ENCODE measurements at regions of chr11 and their contacts with region 1.

Region 1: DNA sequence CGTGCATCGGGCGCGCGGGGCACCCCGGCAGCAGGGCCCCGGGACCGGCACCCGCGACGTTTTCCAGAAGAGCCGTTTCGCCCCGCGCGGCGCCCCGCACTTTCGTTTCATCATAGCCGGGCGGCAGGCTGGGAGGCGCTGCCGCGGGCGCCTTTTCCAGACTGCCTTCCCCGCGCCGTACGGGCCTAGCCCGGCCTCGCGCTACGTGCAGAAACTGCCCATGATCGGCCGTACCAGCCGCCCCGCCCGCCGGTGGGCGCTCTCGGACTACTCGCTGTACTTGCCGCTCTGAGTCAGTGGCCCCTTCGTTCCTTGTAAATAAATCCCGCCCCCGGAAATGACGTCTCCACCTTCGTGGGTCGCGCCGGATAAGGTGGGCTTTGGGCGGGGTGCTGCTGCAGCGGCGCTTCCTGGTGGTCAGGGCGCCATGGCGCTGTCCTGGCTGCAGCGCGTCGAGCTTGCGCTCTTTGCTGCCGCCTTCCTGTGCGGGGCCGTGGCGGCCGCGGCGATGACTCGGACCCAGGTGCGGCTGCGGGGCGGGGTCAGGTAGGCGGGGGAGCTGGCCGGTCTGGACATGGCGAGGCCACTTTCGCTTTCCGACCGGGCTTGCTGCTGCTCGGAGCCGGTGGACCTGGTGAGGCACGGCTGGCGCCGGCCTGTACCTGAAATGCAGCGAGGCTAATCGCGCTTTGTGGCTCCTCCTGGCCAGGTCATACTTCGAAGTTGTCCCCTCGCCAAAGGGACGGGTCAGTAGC is at the start of gene TMEM179B:
- DNase-seq: peak; percentile 96 to 100 (median 99)

Region 2: GRCh38 chr11:62689421-62690183 is 97.6 kb before region 1 on chr11 and contains the start of gene LRRN4CL:
- intact Hi-C with region 1: no loop called
- DNase-seq: peak; percentile 29 to 91 (median 69)

Region 3: DNA sequence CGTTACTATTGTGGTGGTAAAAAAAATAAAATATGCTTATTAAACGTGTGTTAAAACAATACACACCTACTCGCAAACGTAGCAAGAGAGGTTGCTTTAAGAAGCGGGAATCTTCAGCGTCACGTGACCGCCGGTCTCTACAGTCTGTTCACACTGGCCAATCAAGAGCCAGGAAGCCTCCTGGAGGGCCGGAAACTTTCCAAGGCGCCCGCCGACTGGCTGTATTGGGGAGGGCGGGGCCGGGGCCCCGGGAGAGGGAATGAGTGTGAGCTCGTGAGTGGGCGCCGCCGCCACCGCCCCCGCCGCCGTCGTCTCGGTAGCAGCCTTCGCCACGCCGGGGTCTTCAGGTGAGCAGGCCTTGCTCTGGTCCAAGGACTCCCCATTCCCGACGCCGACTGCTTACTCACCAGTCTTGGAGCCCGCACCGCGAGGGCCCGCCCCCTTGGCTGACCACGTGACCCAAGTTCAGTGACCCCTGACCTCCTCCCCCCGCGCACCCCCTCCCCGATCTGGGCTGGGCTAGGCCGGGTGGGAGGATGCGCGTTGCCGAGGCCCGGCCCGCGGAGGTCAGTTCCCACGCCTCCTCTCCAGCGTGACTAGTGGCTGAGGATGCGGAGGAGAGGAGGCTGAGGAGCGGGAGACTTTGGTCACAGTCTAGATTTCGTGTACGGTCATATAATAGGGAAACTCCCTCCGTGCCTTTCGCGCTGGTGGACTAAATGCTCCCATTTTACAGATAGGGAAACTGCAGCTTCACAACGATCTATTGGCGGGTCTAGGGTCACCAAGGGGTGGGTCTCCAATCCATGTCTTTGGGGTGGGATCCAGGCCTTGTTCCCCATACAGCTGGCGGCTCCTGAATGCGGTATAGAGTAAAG is 15.8 kb before region 1 on chr11 and contains the start of gene TAF6L:
- intact Hi-C with region 1: loop called (anchors 2 kb)
- DNase-seq: peak; percentile 96 to 100 (median 98)

Region 4: DNA sequence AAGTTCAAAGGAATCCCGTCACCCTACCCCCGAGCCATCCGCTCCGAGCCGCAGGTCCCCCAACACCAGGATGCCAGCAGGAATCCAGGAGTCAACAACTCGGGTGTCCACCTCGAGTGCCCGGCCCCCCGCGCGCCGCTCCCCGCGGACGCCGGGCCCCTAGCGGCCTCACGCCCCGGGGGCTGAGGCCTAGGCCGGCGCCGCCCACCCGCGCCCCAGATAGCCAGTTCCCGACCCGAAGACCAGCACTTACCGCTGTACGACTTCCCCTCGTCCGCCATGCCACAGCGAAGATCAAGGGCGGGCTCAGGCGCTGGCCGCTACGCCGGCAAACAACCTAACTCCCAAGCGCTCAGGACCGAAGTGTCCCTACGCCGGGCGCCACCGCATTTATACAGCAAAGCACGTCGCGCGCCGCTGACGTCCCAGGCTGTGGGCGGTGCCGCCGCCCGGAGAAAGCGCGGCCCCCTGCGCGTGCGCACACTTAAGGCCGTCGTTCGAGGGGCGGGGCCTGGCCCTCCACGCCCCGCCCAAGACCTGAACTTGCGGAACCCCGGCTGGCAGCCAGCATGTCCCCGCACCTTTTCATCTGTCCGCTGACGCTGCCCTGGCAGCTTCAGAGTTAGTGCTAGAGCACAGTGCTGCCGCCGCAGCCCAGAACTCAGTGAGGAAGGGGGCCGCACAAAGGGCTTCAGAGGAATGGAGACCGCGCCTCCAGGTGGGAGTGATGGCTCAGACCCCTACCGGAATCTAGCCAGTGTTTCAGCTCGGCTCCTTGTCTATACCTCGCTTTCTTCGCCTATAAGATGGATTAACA is 18.1 kb after region 1 on chr11 and contains the start of gene NXF1:
- intact Hi-C with region 1: loop called (anchors 2 kb)
- DNase-seq: peak; percentile 89 to 98 (median 96)

Region 5: GRCh38 chr11:62831520-62832335 is 44.5 kb after region 1 on chr11 and contains the start of gene STX5:
- intact Hi-C with region 1: loop called (anchors 10 kb)
- DNase-seq: peak; percentile 99 to 100 (median 100)

Region 6: DNA sequence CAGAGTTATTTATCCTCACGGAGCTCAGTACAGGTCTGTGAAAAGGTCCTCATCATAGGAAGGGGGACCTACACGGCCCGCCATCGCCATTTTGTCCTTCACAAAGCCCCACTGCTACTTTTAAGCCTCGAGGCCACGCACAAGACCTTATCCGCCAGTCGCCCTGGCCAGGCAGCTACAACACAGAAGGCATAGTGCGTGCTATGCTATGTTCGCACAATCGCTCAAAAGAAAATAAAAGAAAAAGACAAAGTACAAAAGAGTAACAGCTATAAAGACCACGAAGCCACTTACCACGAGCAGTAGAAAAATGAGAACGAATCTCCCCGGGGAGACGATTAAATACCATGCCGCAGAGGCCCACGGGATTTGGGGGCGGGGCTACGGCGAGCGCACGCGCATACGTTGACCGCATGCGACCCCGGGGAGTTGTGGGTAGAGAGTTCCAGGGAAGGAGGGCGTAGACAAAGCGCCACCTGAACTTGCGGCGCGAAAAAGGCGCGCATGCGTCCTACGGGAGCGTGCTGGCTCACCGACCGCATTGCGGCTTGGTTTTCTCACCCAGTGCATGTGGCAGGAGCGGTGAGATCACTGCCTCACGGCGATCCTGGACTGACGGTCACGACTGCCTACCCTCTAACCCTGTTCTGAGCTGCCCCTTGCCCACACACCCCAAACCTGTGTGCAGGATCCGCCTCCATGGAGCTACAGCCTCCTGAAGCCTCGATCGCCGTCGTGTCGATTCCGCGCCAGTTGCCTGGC is 68.6 kb after region 1 on chr11:
- intact Hi-C with region 1: loop called (anchors 5 kb)
- DNase-seq: peak; percentile 89 to 98 (median 95)

Region 7: DNA sequence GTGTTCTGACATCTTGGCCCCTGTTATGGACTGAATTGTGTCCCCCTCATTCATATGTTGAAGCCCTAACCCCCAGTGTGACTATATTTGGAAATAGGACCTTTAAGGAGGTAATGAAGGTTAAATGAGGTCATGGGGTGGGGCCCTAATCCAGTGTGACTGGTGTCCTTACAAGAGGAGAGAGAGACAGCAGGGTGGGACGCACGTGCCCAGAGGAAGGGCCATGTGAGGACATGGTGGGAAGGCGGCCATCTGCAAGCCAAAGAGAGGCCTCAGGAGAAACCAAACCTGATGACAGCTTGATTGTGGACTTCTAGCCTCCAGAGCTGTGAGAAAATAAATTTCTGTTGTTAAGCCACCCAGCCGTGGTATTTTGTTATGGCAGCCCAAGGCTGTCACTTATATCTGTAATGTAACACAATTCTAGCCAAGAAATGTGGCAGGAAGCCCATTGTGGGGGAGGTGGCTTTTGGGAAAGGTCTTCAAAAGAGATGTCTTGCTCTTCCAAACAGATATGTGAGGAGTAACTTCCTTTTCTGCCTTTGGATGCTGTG is 173.9 kb after region 1 on chr11:
- intact Hi-C with region 1: no loop called
- DNase-seq: peak in 1 of 42 donors; percentile 3

Region 8: DNA sequence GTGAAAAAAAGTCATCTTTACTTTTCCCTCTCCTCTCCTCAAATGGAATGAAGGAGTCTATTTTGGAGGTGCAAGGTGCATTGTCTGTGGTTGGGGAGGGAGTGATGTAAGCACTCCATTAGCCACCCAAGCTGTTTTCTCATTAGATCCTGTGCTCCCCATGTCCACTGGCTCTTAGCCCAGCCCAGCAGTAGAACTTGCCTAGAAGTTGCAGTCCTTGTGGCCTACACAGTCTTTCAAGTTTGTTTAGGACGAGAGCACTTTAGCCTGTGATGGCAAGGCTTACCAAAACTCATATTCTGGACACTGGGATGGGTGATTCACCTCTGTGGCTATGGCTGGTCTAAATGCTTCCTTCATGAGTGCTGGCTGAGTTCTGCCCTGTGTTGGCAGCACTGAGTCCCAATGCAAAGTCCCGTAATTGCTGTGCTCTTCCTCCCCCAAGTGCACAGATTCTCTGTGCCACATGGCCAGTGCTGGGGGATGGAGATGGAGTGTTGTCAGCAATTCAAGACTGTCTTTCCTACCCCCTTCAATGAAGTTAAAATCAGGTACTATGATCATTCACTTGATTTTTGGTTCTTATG is 440.4 kb after region 1 on chr11:
- intact Hi-C with region 1: no loop called
- DNase-seq: no peak